ENCODE measurements at regions of chr4 and their contacts with region 1.

Region 1: GRCh38 chr4:186936496-186937375 is 213.1 kb upstream of the FAT1 start:
- DNase-seq: peak; percentile 25 to 88
- H3K4me3 ChIP-seq: peak overlapping the region; percentile 43; the same call in 1 of the 2 replicates
- H3K27ac ChIP-seq: peak overlapping the region; percentile 78
- H3K4me1 ChIP-seq: peaks cover 17% of the 10 kb centered on the region
- H3K27me3 ChIP-seq: no peaks in the 10 kb centered on the region
- CTCF ChIP-seq: peak; percentile 41; the same call in 1 of the 2 replicates

Region 2: DNA sequence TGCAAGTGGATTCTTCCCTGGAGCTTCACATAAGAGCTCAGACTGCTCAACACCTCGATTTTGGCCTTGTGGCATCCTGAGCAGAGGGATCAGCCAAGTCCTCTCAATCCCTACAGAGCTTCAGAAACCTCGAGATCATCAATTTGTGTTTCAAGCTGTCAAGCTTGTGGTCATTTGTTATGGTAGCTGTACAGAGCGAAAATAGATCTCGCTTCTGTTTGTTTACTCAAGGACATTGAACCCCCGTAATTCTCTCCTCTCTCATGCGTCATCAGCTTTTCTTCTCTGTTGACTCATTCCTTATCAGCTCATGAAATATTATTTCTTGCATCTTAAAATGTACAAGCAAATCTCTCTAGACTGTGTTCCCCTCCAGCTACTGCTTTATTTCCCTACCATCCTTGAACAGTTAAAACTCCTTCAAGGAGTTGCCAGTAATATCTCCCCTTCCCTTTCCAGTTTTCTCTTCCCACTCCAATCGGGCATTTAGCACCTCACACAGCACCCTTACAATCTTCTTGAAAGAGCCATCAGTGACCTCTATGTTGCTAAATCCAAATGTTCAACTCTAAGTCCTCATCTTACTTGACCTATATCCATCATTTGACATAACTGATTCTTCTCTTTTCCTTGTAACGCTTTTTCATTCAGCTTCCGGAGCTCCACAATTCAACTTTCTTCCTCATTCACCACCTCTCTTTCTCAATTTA is 106.8 kb before region 1 on chr4:
- CTCF ChIA-PET with region 1: no interaction called
- POLR2A ChIA-PET with region 1: no interaction called
- intact Hi-C with region 1: loop called (anchors 5 kb)
- DNase-seq: peak; percentile 21 to 78
- H3K4me3 ChIP-seq: no peak overlapping the region
- H3K27ac ChIP-seq: no peak overlapping the region
- H3K4me1 ChIP-seq: peaks cover 15% of the 10 kb centered on the region
- H3K27me3 ChIP-seq: no peaks in the 10 kb centered on the region
- CTCF ChIP-seq: no peak

Region 3: GRCh38 chr4:186845137-186845842 is 91.4 kb before region 1 on chr4:
- CTCF ChIA-PET with region 1: no interaction called
- POLR2A ChIA-PET with region 1: no interaction called
- intact Hi-C with region 1: loop called (anchors 2 kb)
- DNase-seq: peak; percentile 53 to 74
- H3K4me3 ChIP-seq: no peak overlapping the region
- H3K27ac ChIP-seq: peak overlapping the region; percentile 49
- H3K4me1 ChIP-seq: peaks cover 20% of the 10 kb centered on the region
- H3K27me3 ChIP-seq: no peaks in the 10 kb centered on the region
- CTCF ChIP-seq: no peak